PC-3 (cell line): ENCODE measurements at regions of chr10 and their contacts with region 1.

Region 1: DNA sequence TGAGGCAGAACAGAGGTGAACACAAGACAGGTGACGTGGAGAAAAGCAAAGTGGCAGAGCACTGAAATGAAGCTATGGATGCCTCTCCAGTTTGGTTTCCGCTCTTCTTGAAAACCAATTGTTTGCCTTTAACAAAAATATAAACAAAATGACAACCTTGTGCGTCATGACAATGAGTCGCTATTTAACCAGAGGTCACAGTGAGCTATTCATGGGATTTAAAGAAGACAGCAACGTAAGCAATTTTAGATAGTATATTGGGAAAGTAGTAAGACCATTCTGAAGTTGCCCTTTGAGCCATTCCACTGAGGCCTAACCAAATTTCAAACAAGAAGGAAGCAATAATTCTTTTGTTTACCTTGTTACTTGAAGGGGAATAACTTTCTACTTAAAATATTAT is 15.2 kb upstream of the LRRTM3 start:
- DNase-seq: peak; percentile 92
- ATAC-seq: peak; percentile 73
- H3K4me3 ChIP-seq: no peak overlapping the region
- H3K27ac ChIP-seq: peak overlapping the region; percentile 2
- H3K4me1 ChIP-seq: peaks cover 11% of the 10 kb centered on the region
- H3K27me3 ChIP-seq: no peaks in the 10 kb centered on the region
- CTCF ChIP-seq: no peak

Region 2: DNA sequence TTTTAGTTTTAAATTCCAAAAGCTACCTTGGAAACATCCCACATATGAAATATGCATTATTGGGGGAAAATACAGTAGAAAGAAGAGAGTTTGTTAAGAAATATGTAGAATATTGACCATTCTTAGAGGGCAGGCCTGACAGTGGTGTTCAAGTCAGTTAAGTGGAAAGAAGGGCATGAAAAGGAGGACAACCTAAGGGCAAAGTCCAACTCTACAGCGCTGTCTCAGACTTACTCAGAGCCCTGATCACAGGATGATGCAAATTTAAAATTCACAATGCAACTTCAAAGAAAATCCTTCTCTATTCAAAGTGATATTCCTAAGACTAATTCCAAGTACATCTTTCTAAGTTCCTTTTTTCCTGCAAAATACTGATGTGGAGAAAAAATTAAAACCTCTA is 124.0 kb before region 1 on chr10:
- CTCF ChIA-PET with region 1: no interaction called
- POLR2A ChIA-PET with region 1: no interaction called
- intact Hi-C with region 1: no loop called
- DNase-seq: peak; percentile 39
- ATAC-seq: peak; percentile 34; the same call in 1 of the 2 replicates
- H3K4me3 ChIP-seq: no peak overlapping the region
- H3K27ac ChIP-seq: no peak overlapping the region
- H3K4me1 ChIP-seq: peaks cover 21% of the 10 kb centered on the region
- H3K27me3 ChIP-seq: no peaks in the 10 kb centered on the region
- CTCF ChIP-seq: no peak

Region 3: GRCh38 chr10:66852811-66853210 is 57.9 kb before region 1 on chr10:
- CTCF ChIA-PET with region 1: no interaction called
- POLR2A ChIA-PET with region 1: no interaction called
- intact Hi-C with region 1: no loop called
- DNase-seq: no peak
- ATAC-seq: no peak
- H3K4me3 ChIP-seq: no peak overlapping the region
- H3K27ac ChIP-seq: no peak overlapping the region
- H3K4me1 ChIP-seq: no peaks in the 10 kb centered on the region
- H3K27me3 ChIP-seq: no peaks in the 10 kb centered on the region
- CTCF ChIP-seq: no peak

Region 4: GRCh38 chr10:66869635-66870034 is 41.0 kb before region 1 on chr10:
- CTCF ChIA-PET with region 1: no interaction called
- POLR2A ChIA-PET with region 1: no interaction called
- intact Hi-C with region 1: loop called (anchors 2 kb)
- DNase-seq: no peak
- ATAC-seq: peak; percentile 65
- H3K4me3 ChIP-seq: no peak overlapping the region
- H3K27ac ChIP-seq: no peak overlapping the region
- H3K4me1 ChIP-seq: no peaks in the 10 kb centered on the region
- H3K27me3 ChIP-seq: no peaks in the 10 kb centered on the region
- CTCF ChIP-seq: no peak

Region 5: GRCh38 chr10:66892871-66893270 is 17.8 kb before region 1 on chr10:
- CTCF ChIA-PET with region 1: no interaction called
- POLR2A ChIA-PET with region 1: interaction called, 3 read pairs
- intact Hi-C with region 1: loop called (anchors 1 kb)
- DNase-seq: no peak
- ATAC-seq: no peak
- H3K4me3 ChIP-seq: no peak overlapping the region
- H3K27ac ChIP-seq: no peak overlapping the region
- H3K4me1 ChIP-seq: peaks cover 14% of the 10 kb centered on the region
- H3K27me3 ChIP-seq: no peaks in the 10 kb centered on the region
- CTCF ChIP-seq: no peak